Aorta (tissue), 5 donors: ENCODE measurements at regions of chr10 and their contacts with region 1.

Region 1: GRCh38 chr10:84328418-84329195 is at the start of gene CCSER2:
- DNase-seq: peak; percentile 99 to 100
- ATAC-seq: peak; percentile 98
- H3K4me3 ChIP-seq: peak within 1 kb of the TSS; percentile 95 to 100
- H3K27ac ChIP-seq: peak within 1 kb of the TSS; percentile 94 to 96
- H3K4me1 ChIP-seq: peaks cover 0 to 2% of the 10 kb centered on the region in 2 donors
- H3K27me3 ChIP-seq: no peaks in the 10 kb centered on the region
- total RNA-seq, gene CCSER2: 95.0 to 111 TPM

Region 2: DNA sequence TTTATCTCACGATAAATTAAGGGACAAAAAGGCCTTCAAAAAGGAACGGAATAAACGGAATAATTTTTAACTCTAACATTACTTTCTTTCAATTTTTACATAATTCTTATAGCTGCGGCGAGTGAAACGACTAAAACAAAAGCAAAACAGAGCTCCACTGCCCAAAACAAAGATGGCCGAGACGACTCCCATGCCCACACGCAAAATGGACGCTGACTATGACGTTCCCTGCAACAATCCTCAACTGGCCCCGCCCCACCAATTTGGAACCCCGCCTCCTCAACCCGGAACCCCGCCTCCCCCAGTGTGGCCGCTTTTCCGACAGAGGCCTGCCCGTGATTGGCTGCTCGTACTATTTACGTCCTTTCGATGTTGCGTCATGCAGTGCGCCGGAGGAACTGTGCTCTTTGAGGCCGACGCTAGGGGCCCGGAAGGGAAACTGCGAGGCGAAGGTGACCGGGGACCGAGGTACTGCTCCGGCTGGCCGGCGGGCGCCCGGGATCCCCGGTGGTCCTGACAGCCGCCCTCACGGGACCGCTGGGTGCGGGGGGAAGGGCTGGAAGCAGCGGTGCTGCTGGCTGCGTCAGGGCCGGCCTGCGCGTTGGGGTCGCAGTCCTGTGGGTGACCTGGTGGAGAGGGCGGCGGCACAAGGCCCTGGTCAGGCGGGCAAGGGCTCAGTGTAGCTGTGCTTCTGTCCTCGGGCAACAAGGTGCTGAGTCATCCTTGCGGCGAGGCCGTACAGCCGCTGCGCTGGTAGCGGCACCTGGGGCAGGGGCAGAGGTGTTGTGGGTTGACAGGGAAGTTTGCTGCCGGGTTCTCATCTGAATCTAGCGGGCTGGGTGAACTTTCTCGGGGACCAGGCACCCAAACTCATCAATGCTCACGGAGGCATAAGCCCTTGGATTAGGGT is 189.2 kb before region 1 on chr10 and contains the start of gene GHITM:
- intact Hi-C with region 1: loop called in 1 of 2 experiments (anchors 10 kb)
- DNase-seq: peak; percentile 99
- ATAC-seq: peak; percentile 99
- H3K4me3 ChIP-seq: peak within 1 kb of the TSS; percentile 73 to 90
- H3K27ac ChIP-seq: peak within 1 kb of the TSS; percentile 51 to 74
- H3K4me1 ChIP-seq: peaks cover 0 to 3% of the 10 kb centered on the region in 2 donors
- H3K27me3 ChIP-seq: no peaks in the 10 kb centered on the region
- total RNA-seq, gene GHITM: 77.2 to 88.3 TPM

Region 3: DNA sequence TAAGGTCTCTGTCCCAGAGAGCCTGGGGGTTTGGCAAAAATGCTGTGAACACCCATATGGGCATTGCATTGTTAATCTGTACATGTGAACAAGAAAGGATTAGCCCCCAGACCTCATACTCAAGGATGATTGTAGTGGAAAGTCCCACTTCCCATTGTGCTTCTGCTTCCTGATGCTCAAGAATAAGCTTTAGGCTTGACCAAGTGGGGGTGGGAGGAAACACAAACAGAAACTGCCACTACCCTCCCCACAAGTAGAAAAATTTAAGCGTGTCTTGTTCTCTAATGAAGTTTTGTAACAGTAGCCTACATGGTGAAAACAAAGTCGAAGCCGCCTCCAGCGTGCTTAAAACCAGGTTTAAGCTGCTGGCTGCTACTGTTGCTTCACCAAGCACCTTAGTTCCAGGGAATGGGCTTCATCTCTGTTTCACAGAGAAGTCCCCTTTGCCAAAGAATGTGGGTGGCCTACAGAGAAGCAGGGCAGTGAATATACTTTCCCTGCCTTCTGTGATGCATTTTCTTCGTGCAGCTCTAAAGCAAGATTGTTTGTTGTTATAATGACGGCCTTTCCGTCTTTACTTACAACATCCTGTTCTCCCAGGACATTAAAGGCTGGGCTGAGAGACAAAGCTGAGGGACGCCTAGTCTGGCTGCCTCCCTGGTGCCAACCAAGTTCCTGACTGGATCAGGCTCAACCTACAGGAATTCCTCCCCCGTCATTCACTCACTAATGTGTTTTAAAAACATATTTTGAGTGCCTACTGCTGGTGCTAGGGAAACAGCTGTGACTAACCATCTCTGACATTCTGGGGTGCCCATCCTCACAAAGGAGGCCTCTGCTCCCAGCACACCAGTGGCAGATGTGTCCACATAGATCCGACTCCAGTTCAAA is 32.3 kb before region 1 on chr10:
- intact Hi-C with region 1: loop called in 1 of 2 experiments (anchors 1 kb)
- DNase-seq: peak in 1 of 2 donors; percentile 70
- ATAC-seq: peak; percentile 77
- H3K4me3 ChIP-seq: no peak overlapping the region
- H3K27ac ChIP-seq: peak overlapping the region in 1 of 2 donors; percentile 55
- H3K4me1 ChIP-seq: peaks cover 4 to 11% of the 10 kb centered on the region in 2 donors
- H3K27me3 ChIP-seq: no peaks in the 10 kb centered on the region